ENCODE measurements at regions of chr17 and their contacts with region 1.

Region 1: DNA sequence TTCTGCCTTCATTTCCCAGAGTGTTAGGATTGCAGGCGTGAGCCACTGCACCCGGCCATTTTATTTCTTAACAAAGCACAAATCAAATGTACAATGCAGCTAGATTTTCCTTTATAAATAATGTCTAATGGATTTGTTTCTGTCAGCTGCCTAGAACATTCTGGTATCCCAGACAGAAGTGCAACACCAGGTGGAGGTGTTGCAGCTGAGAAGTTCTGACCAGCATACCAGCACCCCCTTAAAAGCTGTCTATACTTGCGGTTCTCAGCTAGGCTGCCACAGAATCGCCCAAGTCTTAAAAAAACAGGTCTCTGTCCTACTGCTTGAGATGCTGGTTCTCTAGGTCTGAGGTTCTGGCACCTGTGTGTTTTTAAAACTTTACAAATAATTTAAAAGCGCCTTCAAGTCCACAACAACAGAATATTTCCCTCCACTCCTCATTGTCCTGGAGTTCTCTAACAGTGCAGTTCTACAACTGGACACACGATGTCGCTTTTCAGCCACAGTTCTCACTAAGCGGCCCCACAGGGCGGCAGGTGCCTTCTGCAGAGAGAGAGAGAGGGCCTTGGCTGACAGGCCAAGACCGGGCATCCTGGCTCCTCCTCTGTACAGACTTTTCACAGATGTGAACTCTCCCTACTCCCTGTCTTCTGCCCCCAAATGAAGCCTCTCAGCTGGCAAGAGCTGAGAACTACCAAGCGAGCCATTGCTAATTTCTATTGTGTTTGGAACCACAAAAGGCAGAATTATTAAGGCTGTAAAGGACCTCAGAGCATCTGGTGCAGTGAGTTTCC is 32.6 kb upstream of the MEOX1 start:
- DNase-seq: peak; percentile 93
- H3K4me3 Mint-ChIP-seq: no peak overlapping the region
- H3K27ac Mint-ChIP-seq: no peak overlapping the region
- H3K4me1 Mint-ChIP-seq: no peaks in the 10 kb centered on the region
- H3K27me3 Mint-ChIP-seq: peaks cover 8% of the 10 kb centered on the region

Region 2: GRCh38 chr17:43760254-43760852 is 66.1 kb after region 1 on chr17:
- intact Hi-C with region 1: loop called (anchors 1 kb)
- DNase-seq: peak; percentile 97
- H3K4me3 Mint-ChIP-seq: no peak overlapping the region
- H3K27ac Mint-ChIP-seq: no peak overlapping the region
- H3K4me1 Mint-ChIP-seq: no peaks in the 10 kb centered on the region
- H3K27me3 Mint-ChIP-seq: peaks cover 18% of the 10 kb centered on the region

Measured in activated CD4-positive, alpha-beta T cell treated with anti-CD3 and anti-CD28 coated beads, Interleukin-2, amount 10 ng/mL, durations not matched to agents 24 days and 14 days (primary cell).